ENCODE measurements at regions of chr3 and their contacts with region 1.

Region 1: GRCh38 chr3:49839193-49839809 is 17.1 kb downstream of the TRAIP start:
- DNase-seq: peak; percentile 90
- ATAC-seq: peak; percentile 93
- H3K4me3 Mint-ChIP-seq: no peak overlapping the region
- H3K27ac Mint-ChIP-seq: no peak overlapping the region
- H3K4me1 Mint-ChIP-seq: peaks cover 1% of the 10 kb centered on the region
- H3K27me3 Mint-ChIP-seq: no peaks in the 10 kb centered on the region
- CTCF ChIP-seq: peak; percentile 78

Region 2: GRCh38 chr3:49723628-49724551 is 115.4 kb before region 1 on chr3 and contains the start of gene GMPPB:
- CTCF ChIA-PET with region 1: interaction called, 13 read pairs
- POLR2A ChIA-PET with region 1: interaction called, 4 read pairs
- intact Hi-C with region 1: no loop called
- DNase-seq: peak; percentile 96
- ATAC-seq: peak; percentile 82
- H3K4me3 Mint-ChIP-seq: peak within 1 kb of the TSS; percentile 92
- H3K27ac Mint-ChIP-seq: peak within 1 kb of the TSS; percentile 97
- H3K4me1 Mint-ChIP-seq: peaks cover 21% of the 10 kb centered on the region
- H3K27me3 Mint-ChIP-seq: no peaks in the 10 kb centered on the region
- CTCF ChIP-seq: no peak
- total RNA-seq, gene GMPPB: 34.7 to 35.2 TPM

Region 3: GRCh38 chr3:49786241-49786958 is 52.9 kb before region 1 on chr3 and contains the start of gene IP6K1:
- CTCF ChIA-PET with region 1: interaction called, 15 read pairs
- POLR2A ChIA-PET with region 1: no interaction called
- intact Hi-C with region 1: no loop called
- DNase-seq: peak; percentile 100
- ATAC-seq: peak; percentile 99
- H3K4me3 Mint-ChIP-seq: peak within 1 kb of the TSS; percentile 89
- H3K27ac Mint-ChIP-seq: peak within 1 kb of the TSS; percentile 96
- H3K4me1 Mint-ChIP-seq: peaks cover 35% of the 10 kb centered on the region
- H3K27me3 Mint-ChIP-seq: peaks cover 1% of the 10 kb centered on the region
- CTCF ChIP-seq: no peak
- total RNA-seq, gene IP6K1: 23.5 to 24.2 TPM

Region 4: GRCh38 chr3:49826016-49826415 is 13.3 kb before region 1 on chr3:
- CTCF ChIA-PET with region 1: interaction called, 37 read pairs
- POLR2A ChIA-PET with region 1: no interaction called
- intact Hi-C with region 1: no loop called
- DNase-seq: no peak
- ATAC-seq: no peak
- H3K4me3 Mint-ChIP-seq: no peak overlapping the region
- H3K27ac Mint-ChIP-seq: no peak overlapping the region
- H3K4me1 Mint-ChIP-seq: no peaks in the 10 kb centered on the region
- H3K27me3 Mint-ChIP-seq: no peaks in the 10 kb centered on the region
- CTCF ChIP-seq: no peak

Region 5: GRCh38 chr3:49856181-49857005 is 17.1 kb after region 1 on chr3 and contains the start of gene TRAIP:
- CTCF ChIA-PET with region 1: interaction called, 20 read pairs
- POLR2A ChIA-PET with region 1: interaction called, 4 read pairs
- intact Hi-C with region 1: no loop called
- DNase-seq: peak; percentile 96
- ATAC-seq: peak; percentile 99
- H3K4me3 Mint-ChIP-seq: peak within 1 kb of the TSS; percentile 98
- H3K27ac Mint-ChIP-seq: peak within 1 kb of the TSS; percentile 88
- H3K4me1 Mint-ChIP-seq: peaks cover 12% of the 10 kb centered on the region
- H3K27me3 Mint-ChIP-seq: no peaks in the 10 kb centered on the region
- CTCF ChIP-seq: no peak
- total RNA-seq, gene TRAIP: 23.2 to 25.1 TPM

Region 6: GRCh38 chr3:49906004-49906743 is 66.9 kb after region 1 on chr3:
- CTCF ChIA-PET with region 1: interaction called, 19 read pairs
- POLR2A ChIA-PET with region 1: no interaction called
- intact Hi-C with region 1: no loop called
- DNase-seq: peak; percentile 79
- ATAC-seq: peak; percentile 38
- H3K4me3 Mint-ChIP-seq: no peak overlapping the region
- H3K27ac Mint-ChIP-seq: peak overlapping the region; percentile 52
- H3K4me1 Mint-ChIP-seq: peaks cover 20% of the 10 kb centered on the region
- H3K27me3 Mint-ChIP-seq: no peaks in the 10 kb centered on the region
- CTCF ChIP-seq: peak; percentile 71